ENCODE measurements at regions of chr18 and their contacts with region 1.

Region 1: DNA sequence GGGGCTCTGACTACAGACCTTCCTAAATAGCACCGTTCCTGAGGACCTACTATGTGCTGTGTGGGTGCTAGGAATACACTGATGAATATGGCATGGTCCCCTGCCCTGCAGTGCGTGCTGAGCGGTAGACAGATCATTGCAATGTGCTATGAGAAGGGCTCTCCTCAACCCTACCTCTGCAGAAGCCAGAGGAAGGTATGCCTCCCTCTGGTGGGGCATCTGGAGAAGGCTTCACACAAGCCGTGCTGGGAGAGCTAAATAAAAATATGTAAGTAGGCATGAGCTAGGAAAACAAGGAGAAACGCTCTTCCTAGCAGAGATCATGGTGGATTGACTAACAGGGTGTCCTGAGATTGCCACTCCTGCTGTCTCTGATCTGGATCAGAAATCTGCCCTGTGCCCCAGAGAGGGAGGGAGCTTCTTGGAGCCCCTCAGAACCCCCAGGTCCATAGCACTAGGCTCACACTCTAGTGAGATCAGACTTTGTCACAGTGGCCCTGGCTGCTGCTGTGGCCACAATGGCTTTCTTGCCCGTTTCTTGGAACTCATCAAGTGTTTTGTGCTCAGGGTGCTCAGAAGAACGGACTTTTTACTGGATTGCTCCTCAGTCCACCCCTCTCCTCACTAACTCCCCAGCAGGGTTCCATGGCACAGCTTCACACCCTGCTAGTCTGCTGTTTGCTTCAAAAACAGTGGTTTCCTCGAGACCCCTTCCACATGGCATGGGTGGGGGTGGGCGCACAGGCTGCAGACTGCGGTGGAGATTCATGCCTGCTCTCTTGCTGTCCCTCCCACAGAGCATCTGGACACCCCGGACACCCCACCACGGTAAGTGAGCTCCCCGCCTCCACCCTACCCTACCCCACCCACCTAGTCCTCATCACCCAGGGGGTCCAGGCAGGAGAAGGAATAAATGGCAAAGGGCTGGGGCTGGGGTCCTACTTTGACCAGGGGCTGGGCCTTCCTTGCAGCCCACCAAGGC is 14.2 kb downstream of the SIGLEC15 start:
- DNase-seq: peak; percentile 23
- ATAC-seq: peak; percentile 82
- H3K4me3 ChIP-seq: no peak overlapping the region
- H3K27ac ChIP-seq: no peak overlapping the region
- H3K4me1 ChIP-seq: peaks cover 22% of the 10 kb centered on the region
- H3K27me3 ChIP-seq: peaks cover 1 to 3% of the 10 kb centered on the region in 2 experiments; a peak in 2 of 5 replicates
- CTCF ChIP-seq: peak; percentile 45
- EP300 ChIP-seq: no peak
- POLR2A ChIP-seq: no peak
- RAD21 ChIP-seq: no peak

Region 2: DNA sequence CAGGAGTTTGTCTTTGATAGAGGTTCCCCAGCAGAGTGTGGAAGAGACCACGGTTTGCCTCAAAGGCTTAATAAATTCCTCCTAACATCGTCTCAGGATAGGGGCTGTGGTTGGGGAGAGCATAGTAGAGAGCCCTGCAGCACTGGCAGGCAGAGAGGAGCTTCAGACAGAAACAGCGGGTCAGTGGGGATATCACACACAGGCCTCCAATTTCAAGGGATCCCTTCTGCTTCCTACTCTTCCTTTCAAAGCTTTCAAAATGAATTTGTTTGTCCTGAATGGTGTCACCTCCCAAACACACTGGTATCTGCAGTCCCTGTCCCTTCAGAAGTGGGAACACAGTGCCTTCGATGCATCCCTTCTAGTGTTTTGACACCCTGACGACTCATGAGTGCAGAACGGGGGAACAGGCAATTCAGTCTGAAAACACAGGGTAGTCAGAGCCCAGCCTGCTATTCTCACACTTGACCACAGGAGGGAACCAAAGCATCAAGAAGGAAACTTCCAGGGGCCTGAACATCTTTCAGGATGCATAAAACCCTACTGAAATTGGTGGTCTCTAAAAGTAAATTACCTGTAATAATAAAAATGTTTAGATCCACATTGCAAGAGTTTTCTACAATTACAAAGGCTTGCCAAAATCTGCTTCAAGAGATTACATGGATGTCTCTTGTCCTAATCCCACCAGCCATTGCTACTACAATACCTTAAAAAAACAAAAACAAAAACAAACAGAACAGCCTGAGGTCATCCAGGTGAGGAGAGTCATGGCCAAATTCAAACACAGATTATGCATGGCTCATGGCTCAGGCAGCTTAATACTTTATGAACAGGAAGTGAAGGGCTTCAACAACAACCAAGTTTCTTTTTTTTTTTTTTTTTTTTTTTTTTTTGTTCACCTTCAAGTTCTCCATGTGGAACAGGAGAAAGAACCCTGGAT is 174.6 kb before region 1 on chr18:
- CTCF ChIA-PET with region 1: no interaction called
- POLR2A ChIA-PET with region 1: no interaction called
- in situ Hi-C with region 1: loop called (anchors 10 kb)
- intact Hi-C with region 1: no loop called
- DNase-seq: peak; percentile 28
- ATAC-seq: peak; percentile 83
- H3K4me3 ChIP-seq: no peak overlapping the region
- H3K27ac ChIP-seq: no peak overlapping the region
- H3K4me1 ChIP-seq: peaks cover 7% of the 10 kb centered on the region
- H3K27me3 ChIP-seq: peaks cover 0 to 9% of the 10 kb centered on the region in 2 experiments; a peak in 2 of 5 replicates
- CTCF ChIP-seq: peak; percentile 75
- EP300 ChIP-seq: no peak
- POLR2A ChIP-seq: no peak
- RAD21 ChIP-seq: no peak

Region 3: DNA sequence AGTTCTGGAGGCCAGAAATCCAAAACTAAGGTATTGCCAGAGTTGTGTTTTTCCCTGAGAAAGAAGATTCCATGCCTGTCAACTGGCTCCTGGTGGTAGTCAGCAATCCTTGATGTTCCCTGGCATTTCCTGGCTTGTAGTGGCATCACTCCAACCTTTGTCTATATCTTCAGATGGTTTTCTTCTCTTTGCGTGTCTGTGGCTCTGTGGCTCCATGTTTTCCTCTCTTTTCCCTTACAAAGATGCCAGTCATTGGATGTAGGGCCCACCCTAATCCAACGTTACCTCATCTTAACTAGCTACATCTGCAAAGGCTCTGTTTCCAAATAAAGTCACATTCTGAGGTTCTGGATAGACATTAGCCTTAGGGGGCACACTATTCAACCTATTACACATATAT is 73.9 kb before region 1 on chr18:
- CTCF ChIA-PET with region 1: no interaction called
- POLR2A ChIA-PET with region 1: no interaction called
- in situ Hi-C with region 1: loop called (anchors 5 kb)
- intact Hi-C with region 1: no loop called
- DNase-seq: no peak
- ATAC-seq: no peak
- H3K4me3 ChIP-seq: no peak overlapping the region
- H3K27ac ChIP-seq: no peak overlapping the region
- H3K4me1 ChIP-seq: no peaks in the 10 kb centered on the region
- H3K27me3 ChIP-seq: peaks cover 0 to 2% of the 10 kb centered on the region in 2 experiments; a peak in 1 of 5 replicates
- CTCF ChIP-seq: no peak
- EP300 ChIP-seq: no peak
- POLR2A ChIP-seq: no peak
- RAD21 ChIP-seq: no peak

Region 4: GRCh38 chr18:46310258-46310657 is 470.6 kb after region 1 on chr18:
- CTCF ChIA-PET with region 1: no interaction called
- POLR2A ChIA-PET with region 1: no interaction called
- in situ Hi-C with region 1: no loop called
- intact Hi-C with region 1: no loop called
- DNase-seq: no peak
- ATAC-seq: no peak
- H3K4me3 ChIP-seq: no peak overlapping the region
- H3K27ac ChIP-seq: no peak overlapping the region
- H3K4me1 ChIP-seq: no peaks in the 10 kb centered on the region
- H3K27me3 ChIP-seq: peaks cover 0 to 12% of the 10 kb centered on the region in 2 experiments; a peak in 2 of 5 replicates
- CTCF ChIP-seq: no peak
- EP300 ChIP-seq: no peak
- POLR2A ChIP-seq: no peak
- RAD21 ChIP-seq: no peak

Region 5: GRCh38 chr18:46649071-46649862 is 809.6 kb after region 1 on chr18:
- CTCF ChIA-PET with region 1: no interaction called
- POLR2A ChIA-PET with region 1: no interaction called
- in situ Hi-C with region 1: no loop called
- intact Hi-C with region 1: no loop called
- DNase-seq: no peak
- ATAC-seq: no peak
- H3K4me3 ChIP-seq: no peak overlapping the region
- H3K27ac ChIP-seq: no peak overlapping the region
- H3K4me1 ChIP-seq: no peaks in the 10 kb centered on the region
- H3K27me3 ChIP-seq: peaks cover 0 to 39% of the 10 kb centered on the region in 2 experiments; a peak in 3 of 5 replicates
- CTCF ChIP-seq: no peak
- EP300 ChIP-seq: no peak
- POLR2A ChIP-seq: no peak
- RAD21 ChIP-seq: no peak